B cell (primary cell): ENCODE measurements at regions of chr1 and their contacts with region 1.

Region 1: DNA sequence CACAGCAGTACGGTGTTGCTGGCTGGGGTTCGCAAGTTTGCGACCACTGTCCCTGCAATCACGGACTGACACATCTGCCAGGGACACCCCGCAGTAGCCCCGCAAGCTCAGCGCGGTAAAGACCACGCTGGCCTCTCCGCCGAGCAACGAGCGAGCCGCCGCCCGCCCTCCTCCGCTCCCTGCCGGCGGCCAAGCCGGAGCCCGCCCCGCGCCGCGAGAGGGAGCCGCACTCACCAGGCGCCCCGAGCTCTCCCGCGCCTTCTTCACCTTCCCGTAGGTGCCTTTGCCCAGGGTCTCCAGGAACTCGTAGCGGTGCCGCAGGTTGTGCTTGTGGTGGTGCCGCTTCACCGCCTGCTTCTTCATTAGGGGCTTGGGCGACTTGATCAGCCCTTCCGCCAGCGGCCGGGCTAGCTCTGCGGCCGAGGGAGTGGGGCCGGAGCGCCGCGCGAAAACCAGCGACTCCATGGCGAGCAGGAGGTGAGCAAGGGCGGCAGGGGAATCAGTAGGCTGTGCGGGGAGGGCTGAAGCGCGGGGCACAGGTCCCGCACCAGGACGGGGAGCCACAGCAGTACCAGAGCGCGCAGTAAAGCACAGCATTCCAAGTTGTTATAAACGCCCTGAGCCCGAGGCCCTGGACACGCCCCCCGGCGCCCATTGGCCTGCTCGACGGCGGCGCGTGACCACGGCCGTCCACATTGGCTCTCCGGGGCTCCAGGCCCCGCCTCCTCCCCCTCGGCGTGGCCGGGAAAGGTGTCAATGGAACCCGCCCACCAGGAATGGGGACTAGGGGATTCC is at the start of gene NUAK2:
- DNase-seq: peak; percentile 89
- ATAC-seq: peak; percentile 90
- H3K4me3 ChIP-seq: peak within 1 kb of the TSS; percentile 65 to 100 (median 98)
- H3K4me3 Mint-ChIP-seq: peak within 1 kb of the TSS; percentile 97
- H3K27ac ChIP-seq: peak within 1 kb of the TSS; percentile 65 to 98
- H3K27ac Mint-ChIP-seq: peak within 1 kb of the TSS; percentile 95
- H3K4me1 ChIP-seq: peaks cover 52 to 54% of the 10 kb centered on the region in 2 donors
- H3K4me1 Mint-ChIP-seq: peaks cover 62% of the 10 kb centered on the region
- H3K27me3 ChIP-seq: no peaks in the 10 kb centered on the region
- H3K27me3 Mint-ChIP-seq: peaks cover 2% of the 10 kb centered on the region
- CTCF ChIP-seq: peak; percentile 35
- total RNA-seq, gene NUAK2: 102 and 105 TPM in 2 replicates

Region 2: DNA sequence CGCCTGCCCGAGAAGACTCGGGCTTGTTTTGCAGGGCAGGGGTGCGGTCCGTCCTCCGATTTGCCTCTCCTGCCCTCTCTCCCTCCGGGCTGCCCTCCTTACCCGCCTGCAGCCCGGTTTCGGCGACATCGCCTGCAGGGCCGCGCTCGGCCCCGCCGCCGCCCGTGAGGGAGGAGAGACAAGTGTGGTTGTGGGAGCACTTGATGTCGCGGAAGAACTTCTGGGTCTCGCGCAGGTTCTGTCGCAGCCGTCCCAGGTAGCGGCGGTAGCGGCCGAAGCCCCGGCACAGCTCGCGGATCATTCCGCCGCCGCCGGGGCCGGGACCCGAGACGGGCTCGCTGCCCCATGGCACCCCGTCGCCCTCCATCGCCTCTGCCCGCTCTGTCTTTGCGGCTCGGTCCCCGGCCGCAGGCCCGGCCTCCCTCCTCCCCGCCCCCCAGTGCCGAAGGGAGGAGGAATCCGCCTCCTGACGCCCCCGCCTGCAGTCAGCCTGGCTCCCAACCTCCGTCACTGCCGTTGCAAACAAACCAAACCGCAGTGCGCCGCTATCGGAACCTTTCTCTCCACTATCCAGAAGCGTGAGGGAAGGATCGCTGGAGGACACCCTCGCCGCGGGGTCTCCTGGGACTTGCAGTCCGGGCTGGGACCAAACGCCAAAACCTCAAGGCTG is 110.1 kb before region 1 on chr1 and contains the start of gene DSTYK:
- CTCF ChIA-PET with region 1: no interaction called
- POLR2A ChIA-PET with region 1: no interaction called
- intact Hi-C with region 1: loop called (anchors 1 kb)
- DNase-seq: peak; percentile 96
- ATAC-seq: peak; percentile 85
- H3K4me3 ChIP-seq: peak within 1 kb of the TSS; percentile 70 to 96 (median 91)
- H3K4me3 Mint-ChIP-seq: peak within 1 kb of the TSS; percentile 96
- H3K27ac ChIP-seq: peak within 1 kb of the TSS; percentile 64 to 75
- H3K27ac Mint-ChIP-seq: peak within 1 kb of the TSS; percentile 96
- H3K4me1 ChIP-seq: peaks cover 22 to 25% of the 10 kb centered on the region in 2 donors
- H3K4me1 Mint-ChIP-seq: peaks cover 48% of the 10 kb centered on the region
- H3K27me3 ChIP-seq: no peaks in the 10 kb centered on the region
- H3K27me3 Mint-ChIP-seq: no peaks in the 10 kb centered on the region
- CTCF ChIP-seq: no peak
- total RNA-seq, gene DSTYK: 15.2 and 15.7 TPM in 2 replicates

Region 3: GRCh38 chr1:205273551-205273982 is 47.8 kb before region 1 on chr1:
- CTCF ChIA-PET with region 1: interaction called, 2,421 read pairs
- POLR2A ChIA-PET with region 1: interaction called, 194 read pairs
- intact Hi-C with region 1: loop called (anchors 1 kb)
- DNase-seq: peak; percentile 90
- ATAC-seq: peak; percentile 83
- H3K4me3 ChIP-seq: peak overlapping the region in 3 of 5 experiments; percentile 5 to 27 (median 23)
- H3K4me3 Mint-ChIP-seq: peak overlapping the region; percentile 78
- H3K27ac ChIP-seq: peak overlapping the region in 1 of 2 donors; percentile 37
- H3K27ac Mint-ChIP-seq: peak overlapping the region; percentile 94
- H3K4me1 ChIP-seq: peaks cover 51 to 54% of the 10 kb centered on the region in 2 donors
- H3K4me1 Mint-ChIP-seq: peaks cover 46% of the 10 kb centered on the region
- H3K27me3 ChIP-seq: no peaks in the 10 kb centered on the region
- H3K27me3 Mint-ChIP-seq: no peaks in the 10 kb centered on the region
- CTCF ChIP-seq: peak; percentile 97

Region 4: DNA sequence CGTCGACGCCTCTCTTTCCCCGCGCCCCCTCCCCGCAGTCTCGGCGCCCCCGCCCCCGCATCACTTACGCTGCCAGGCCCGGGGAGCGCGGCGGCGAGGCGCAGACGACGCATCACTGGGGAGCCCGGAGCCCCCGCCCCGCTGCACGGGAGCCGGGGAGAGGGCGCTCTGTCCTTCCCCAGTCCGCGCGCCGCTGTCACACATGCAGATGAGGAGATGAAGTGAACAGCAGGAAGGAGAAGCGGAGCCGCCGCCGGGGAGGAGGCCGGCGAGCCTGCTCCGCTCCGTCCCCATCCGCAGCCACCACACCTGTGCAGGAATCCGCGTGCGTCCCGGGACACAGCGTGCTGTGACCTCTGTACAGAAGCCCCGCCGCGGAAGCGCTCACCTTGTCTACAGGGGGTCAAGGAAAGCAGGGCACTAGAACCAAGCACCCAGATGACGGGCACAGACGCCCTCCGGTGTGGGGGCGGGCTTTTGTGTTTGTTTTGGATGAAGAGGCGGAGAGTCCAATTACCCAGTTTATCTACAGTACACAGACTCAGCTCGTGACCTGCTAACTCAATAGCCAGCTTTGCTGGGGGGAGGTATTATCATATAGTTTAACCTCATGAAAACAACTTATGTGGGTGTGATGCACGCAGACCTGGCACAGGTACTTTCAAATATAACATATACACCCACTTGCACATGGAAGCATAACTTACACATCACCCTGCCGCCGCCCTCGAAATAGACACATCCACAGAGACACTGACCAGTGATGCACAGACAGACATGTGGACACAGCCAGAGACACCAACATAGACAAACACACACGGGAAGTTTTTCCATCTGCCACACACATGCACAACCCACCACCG is 22.9 kb after region 1 on chr1:
- CTCF ChIA-PET with region 1: interaction called, 2,421 read pairs
- POLR2A ChIA-PET with region 1: no interaction called
- intact Hi-C with region 1: no loop called
- DNase-seq: peak; percentile 69
- ATAC-seq: peak; percentile 61
- H3K4me3 ChIP-seq: peak overlapping the region in 4 of 5 experiments; percentile 37 to 51 (median 50)
- H3K4me3 Mint-ChIP-seq: peak overlapping the region; percentile 84
- H3K27ac ChIP-seq: no peak overlapping the region
- H3K27ac Mint-ChIP-seq: peak overlapping the region; percentile 32
- H3K4me1 ChIP-seq: peaks cover 34 to 42% of the 10 kb centered on the region in 2 donors
- H3K4me1 Mint-ChIP-seq: peaks cover 48% of the 10 kb centered on the region
- H3K27me3 ChIP-seq: peaks cover 0 to 20% (median 10%) of the 10 kb centered on the region in 4 experiments
- H3K27me3 Mint-ChIP-seq: peaks cover 8% of the 10 kb centered on the region
- CTCF ChIP-seq: no peak

Region 5: DNA sequence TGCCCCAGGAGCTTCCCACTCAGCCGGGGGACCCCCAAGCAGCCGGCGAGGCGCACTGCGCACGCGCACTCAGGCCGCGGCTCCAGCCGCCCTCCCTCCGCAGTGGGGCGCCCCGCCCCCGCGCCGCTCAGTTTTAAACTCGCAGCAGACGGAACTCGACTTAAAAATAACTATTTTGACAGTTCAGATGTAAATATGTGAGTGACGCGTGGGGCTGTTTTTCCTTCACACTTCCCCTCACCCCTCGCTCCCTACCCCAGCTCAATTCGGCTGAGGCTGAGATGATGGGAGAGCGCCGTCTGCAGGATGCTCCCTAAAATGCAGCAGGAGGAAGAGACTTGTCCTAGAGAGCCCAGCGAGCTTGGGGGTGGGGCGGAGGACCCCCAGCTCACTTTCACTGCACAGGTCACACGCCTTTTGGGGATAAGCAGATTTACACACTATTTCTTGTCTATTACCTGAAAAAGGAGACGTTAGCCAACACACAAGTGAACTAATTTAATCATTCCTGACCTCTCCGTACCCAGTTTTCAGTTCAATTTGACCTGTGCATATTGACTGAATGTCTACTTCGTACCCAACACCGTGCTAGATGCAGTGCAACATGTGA is 109.4 kb after region 1 on chr1:
- CTCF ChIA-PET with region 1: interaction called, 15 read pairs
- POLR2A ChIA-PET with region 1: no interaction called
- intact Hi-C with region 1: no loop called
- DNase-seq: peak; percentile 88
- ATAC-seq: peak; percentile 91
- H3K4me3 ChIP-seq: peak overlapping the region; percentile 23 to 54 (median 46)
- H3K4me3 Mint-ChIP-seq: peak overlapping the region; percentile 80
- H3K27ac ChIP-seq: peak overlapping the region; percentile 4 to 43
- H3K27ac Mint-ChIP-seq: peak overlapping the region; percentile 70
- H3K4me1 ChIP-seq: peaks cover 25 to 33% of the 10 kb centered on the region in 2 donors
- H3K4me1 Mint-ChIP-seq: peaks cover 39% of the 10 kb centered on the region
- H3K27me3 ChIP-seq: no peaks in the 10 kb centered on the region
- H3K27me3 Mint-ChIP-seq: no peaks in the 10 kb centered on the region
- CTCF ChIP-seq: peak; percentile 70